Activated CD8-positive, alpha-beta T cell treated with anti-CD3 and anti-CD28 coated beads for 36 hours (primary cell): ENCODE measurements at regions of chr1 and their contacts with region 1.

Region 1: GRCh38 chr1:86833461-86834215 is 80.3 kb downstream of the SELENOF start:
- DNase-seq: peak; percentile 77
- ATAC-seq: peak; percentile 90
- H3K4me3 Mint-ChIP-seq: no peak overlapping the region
- H3K27ac Mint-ChIP-seq: no peak overlapping the region
- H3K4me1 Mint-ChIP-seq: no peaks in the 10 kb centered on the region
- H3K27me3 Mint-ChIP-seq: no peaks in the 10 kb centered on the region
- CTCF ChIP-seq: peak; percentile 47

Region 2: DNA sequence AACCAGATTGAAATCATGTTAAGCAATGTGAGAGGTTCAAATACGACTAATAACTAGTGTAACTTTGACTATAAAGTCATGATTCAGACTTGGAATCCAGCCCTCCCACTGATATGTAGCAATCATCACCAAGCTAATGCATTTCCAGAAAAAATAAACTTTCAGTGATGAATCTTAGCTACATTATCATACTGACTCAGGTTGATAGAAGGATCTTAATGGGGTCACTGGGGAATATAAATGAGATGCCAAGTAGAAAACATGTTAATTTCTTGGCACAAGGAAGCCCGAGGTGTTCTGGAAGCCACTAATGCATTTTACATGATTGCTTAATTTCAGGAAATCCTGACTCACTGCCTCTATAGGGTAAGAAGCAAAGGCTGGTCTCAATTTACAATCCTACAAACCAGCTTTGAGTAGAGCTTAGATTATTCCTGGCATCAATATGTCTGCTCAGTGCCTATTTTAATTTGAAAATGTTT is 12.6 kb after region 1 on chr1:
- CTCF ChIA-PET with region 1: interaction called, 10 read pairs
- POLR2A ChIA-PET with region 1: no interaction called
- intact Hi-C with region 1: no loop called
- DNase-seq: no peak
- ATAC-seq: no peak
- H3K4me3 Mint-ChIP-seq: no peak overlapping the region
- H3K27ac Mint-ChIP-seq: no peak overlapping the region
- H3K4me1 Mint-ChIP-seq: no peaks in the 10 kb centered on the region
- H3K27me3 Mint-ChIP-seq: no peaks in the 10 kb centered on the region
- CTCF ChIP-seq: no peak

Region 3: GRCh38 chr1:86858524-86859261 is 25.1 kb after region 1 on chr1:
- CTCF ChIA-PET with region 1: interaction called, 14 read pairs
- POLR2A ChIA-PET with region 1: no interaction called
- intact Hi-C with region 1: no loop called
- DNase-seq: no peak
- ATAC-seq: no peak
- H3K4me3 Mint-ChIP-seq: no peak overlapping the region
- H3K27ac Mint-ChIP-seq: no peak overlapping the region
- H3K4me1 Mint-ChIP-seq: no peaks in the 10 kb centered on the region
- H3K27me3 Mint-ChIP-seq: no peaks in the 10 kb centered on the region
- CTCF ChIP-seq: no peak

Region 4: GRCh38 chr1:86965012-86965826 is 131.6 kb after region 1 on chr1:
- CTCF ChIA-PET with region 1: interaction called, 12 read pairs
- POLR2A ChIA-PET with region 1: no interaction called
- intact Hi-C with region 1: loop called (anchors 2 kb)
- DNase-seq: peak; percentile 33
- ATAC-seq: no peak
- H3K4me3 Mint-ChIP-seq: no peak overlapping the region
- H3K27ac Mint-ChIP-seq: no peak overlapping the region
- H3K4me1 Mint-ChIP-seq: no peaks in the 10 kb centered on the region
- H3K27me3 Mint-ChIP-seq: no peaks in the 10 kb centered on the region
- CTCF ChIP-seq: peak; percentile 39